Dendritic cell treated with granulocyte-macrophage colony-stimulating factor and Interleukin-4, amounts not matched to agents 40 ng/mL and 50 ng/mL, for 4 days (primary cell): ENCODE measurements at regions of chr11 and their contacts with region 1.

Region 1: GRCh38 chr11:68257475-68258362 is 14.1 kb downstream of the C11orf24 start:
- H3K4me3 Mint-ChIP-seq: no peak overlapping the region
- H3K27ac Mint-ChIP-seq: no peak overlapping the region
- H3K4me1 Mint-ChIP-seq: peaks cover 6% of the 10 kb centered on the region
- H3K27me3 Mint-ChIP-seq: peaks cover 14% of the 10 kb centered on the region

Region 2: DNA sequence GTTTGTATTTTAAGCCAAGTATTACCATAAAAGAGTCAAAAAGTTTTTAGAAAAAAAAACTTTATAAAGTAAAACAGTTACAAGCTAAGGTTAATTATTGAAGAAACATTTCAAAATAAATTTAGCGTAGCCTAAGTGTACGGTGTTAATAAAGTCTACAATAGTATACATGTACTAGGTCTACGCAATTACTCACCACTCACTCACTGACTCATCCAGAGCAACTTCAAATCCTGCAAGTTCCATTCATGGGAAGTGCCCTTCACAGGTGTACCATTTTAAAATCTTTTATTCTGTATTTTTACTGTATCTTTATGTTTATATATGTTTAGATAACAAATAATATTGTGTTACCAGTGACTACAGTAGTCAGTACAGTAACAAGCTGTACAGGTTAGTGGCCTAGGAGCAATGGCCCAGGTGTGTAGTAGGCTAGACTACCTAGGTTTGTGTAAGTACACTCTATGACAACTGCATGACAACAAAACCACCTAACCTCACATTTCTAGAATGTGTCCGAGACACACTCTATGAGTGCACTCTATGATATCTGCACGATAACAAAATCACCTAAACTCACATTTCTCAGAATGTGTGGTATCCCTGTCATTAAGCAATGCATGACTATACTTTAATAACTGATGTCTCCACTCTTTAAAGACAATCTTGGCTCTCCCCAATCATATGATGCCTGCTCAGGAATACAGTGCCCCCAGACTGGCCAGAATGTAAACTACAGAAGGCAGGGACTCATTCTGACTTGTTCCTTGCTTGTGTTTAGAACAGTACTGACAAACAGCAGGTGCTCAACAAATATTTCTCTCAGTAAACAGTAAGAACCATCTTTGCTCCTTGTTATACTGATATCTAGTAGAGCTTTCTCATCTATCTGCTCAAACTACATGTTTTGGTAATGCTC is 65.8 kb before region 1 on chr11:
- intact Hi-C with region 1: no loop called
- H3K4me3 Mint-ChIP-seq: no peak overlapping the region
- H3K27ac Mint-ChIP-seq: no peak overlapping the region
- H3K4me1 Mint-ChIP-seq: peaks cover 18% of the 10 kb centered on the region
- H3K27me3 Mint-ChIP-seq: no peaks in the 10 kb centered on the region

Region 3: GRCh38 chr11:68206187-68206601 is 51.5 kb before region 1 on chr11:
- intact Hi-C with region 1: no loop called
- H3K4me3 Mint-ChIP-seq: no peak overlapping the region
- H3K27ac Mint-ChIP-seq: no peak overlapping the region
- H3K4me1 Mint-ChIP-seq: peaks cover 45% of the 10 kb centered on the region
- H3K27me3 Mint-ChIP-seq: no peaks in the 10 kb centered on the region

Region 4: GRCh38 chr11:68271781-68272608 is 14.3 kb after region 1 on chr11 and contains the start of gene C11orf24:
- intact Hi-C with region 1: loop called (anchors 1 kb)
- H3K4me3 Mint-ChIP-seq: peak within 1 kb of the TSS; percentile 99
- H3K27ac Mint-ChIP-seq: peak within 1 kb of the TSS; percentile 100
- H3K4me1 Mint-ChIP-seq: peaks cover 68% of the 10 kb centered on the region
- H3K27me3 Mint-ChIP-seq: no peaks in the 10 kb centered on the region

Region 5: GRCh38 chr11:68297812-68298658 is 40.3 kb after region 1 on chr11:
- intact Hi-C with region 1: loop called (anchors 1 kb)
- H3K4me3 Mint-ChIP-seq: no peak overlapping the region
- H3K27ac Mint-ChIP-seq: no peak overlapping the region
- H3K4me1 Mint-ChIP-seq: peaks cover 33% of the 10 kb centered on the region
- H3K27me3 Mint-ChIP-seq: peaks cover 20% of the 10 kb centered on the region

Region 6: GRCh38 chr11:68383976-68384501 is 126.3 kb after region 1 on chr11:
- intact Hi-C with region 1: loop called (anchors 5 kb)
- H3K4me3 Mint-ChIP-seq: no peak overlapping the region
- H3K27ac Mint-ChIP-seq: no peak overlapping the region
- H3K4me1 Mint-ChIP-seq: peaks cover 44% of the 10 kb centered on the region
- H3K27me3 Mint-ChIP-seq: peaks cover 28% of the 10 kb centered on the region

Region 7: GRCh38 chr11:68447015-68447801 is 189.5 kb after region 1 on chr11:
- intact Hi-C with region 1: loop called (anchors 1 kb)
- H3K4me3 Mint-ChIP-seq: no peak overlapping the region
- H3K27ac Mint-ChIP-seq: no peak overlapping the region
- H3K4me1 Mint-ChIP-seq: peaks cover 7% of the 10 kb centered on the region
- H3K27me3 Mint-ChIP-seq: no peaks in the 10 kb centered on the region